Activated T-helper 1 cell treated with anti-CD3 and anti-CD28 coated beads, Interleukin-12 subunit alpha, Interleukin-12 subunit beta, Interleukin-2, Interleukin-4 antibody, amounts not matched to agents 30 ng/mL and 10 ng/mL and 1 ng/mL, durations not matched to agents 14 hours and 24 hours and 36 hours (primary cell): ENCODE measurements at regions of chr5 and their contacts with region 1.

Region 1: DNA sequence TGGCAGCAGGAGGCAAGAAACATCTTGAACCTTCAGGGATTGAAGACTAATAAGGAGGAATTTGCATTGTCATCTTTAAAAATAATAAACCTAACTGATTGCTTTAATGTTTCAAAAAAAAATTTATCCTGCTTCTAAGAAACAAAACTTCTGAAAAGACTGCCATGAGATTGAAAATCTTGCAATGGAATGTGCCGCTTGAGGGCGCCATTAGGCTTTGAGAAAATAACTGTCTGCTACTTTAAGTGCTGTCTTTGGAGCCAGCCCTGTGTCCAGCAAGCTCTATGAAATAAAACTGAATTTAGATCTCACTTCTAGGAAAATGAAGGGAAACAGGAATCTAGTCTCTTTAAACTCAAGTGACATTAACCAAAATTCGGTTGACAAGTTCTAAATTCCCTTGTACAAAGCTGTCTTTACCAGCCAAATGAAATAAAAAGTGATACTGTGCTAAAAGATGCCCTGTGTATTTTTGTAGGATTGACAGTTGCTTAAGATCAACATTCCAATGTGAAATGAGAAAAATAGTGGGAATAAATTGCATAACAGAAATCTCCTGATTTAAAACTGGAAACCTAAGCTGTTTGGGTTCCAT is 79.4 kb downstream of the ESM1 start:
- DNase-seq: peak; percentile 50
- H3K4me3 Mint-ChIP-seq: no peak overlapping the region
- H3K27ac Mint-ChIP-seq: no peak overlapping the region
- H3K4me1 Mint-ChIP-seq: peaks cover 55% of the 10 kb centered on the region
- H3K27me3 Mint-ChIP-seq: peaks cover 37% of the 10 kb centered on the region

Region 2: DNA sequence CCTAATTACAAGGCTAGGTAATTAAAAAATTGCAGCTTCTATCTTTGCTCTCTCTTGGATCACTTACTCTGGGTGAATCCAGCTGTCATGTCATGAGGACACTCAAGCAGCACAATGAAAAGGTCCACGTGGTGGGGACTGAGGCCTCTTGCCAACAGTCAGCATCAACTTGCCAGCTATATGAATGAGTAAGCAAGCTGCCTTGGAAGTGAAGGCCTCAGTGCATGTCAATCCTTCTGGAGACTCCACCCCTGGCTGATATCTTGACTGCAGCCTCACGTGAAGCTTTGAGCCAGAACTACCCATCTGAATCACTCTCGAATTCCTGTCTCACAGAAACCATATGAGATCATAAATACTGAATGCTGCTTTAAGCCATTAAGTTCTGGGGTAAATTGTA is 248.0 kb before region 1 on chr5:
- intact Hi-C with region 1: no loop called
- DNase-seq: no peak
- H3K4me3 Mint-ChIP-seq: no peak overlapping the region
- H3K27ac Mint-ChIP-seq: no peak overlapping the region
- H3K4me1 Mint-ChIP-seq: peaks cover 17% of the 10 kb centered on the region
- H3K27me3 Mint-ChIP-seq: no peaks in the 10 kb centered on the region

Region 3: DNA sequence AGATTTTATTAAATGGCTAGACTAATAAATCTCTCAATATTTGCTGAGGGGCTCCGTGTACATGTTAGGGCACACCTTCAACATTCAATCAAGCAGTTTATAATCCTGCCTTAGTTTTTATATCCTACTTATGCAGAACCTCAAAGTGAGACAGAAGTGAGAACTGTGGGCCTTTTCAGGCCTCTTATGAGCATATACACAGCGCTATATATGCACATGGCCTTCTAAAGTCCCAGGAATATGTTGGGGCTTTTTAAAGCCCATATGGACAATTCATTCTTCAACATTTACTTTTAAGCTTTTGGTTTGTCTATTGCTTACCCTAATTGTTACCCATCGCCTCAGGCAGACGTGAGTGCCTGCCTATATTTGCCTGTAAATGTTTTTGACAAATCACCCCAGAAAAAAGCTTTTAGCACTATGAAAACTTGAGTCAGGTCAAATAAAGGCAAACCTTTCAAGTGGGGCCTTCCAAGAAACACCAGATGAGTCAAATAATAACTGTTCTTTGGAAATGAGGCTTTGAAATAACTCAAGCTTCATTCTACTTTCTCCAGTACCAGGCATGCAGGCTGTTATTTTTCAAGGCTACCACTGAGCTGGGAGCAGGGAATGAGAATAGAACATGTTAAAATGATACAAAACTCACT is 21.2 kb after region 1 on chr5:
- intact Hi-C with region 1: loop called (anchors 1 kb)
- DNase-seq: no peak
- H3K4me3 Mint-ChIP-seq: no peak overlapping the region
- H3K27ac Mint-ChIP-seq: peak overlapping the region; percentile 3
- H3K4me1 Mint-ChIP-seq: peaks cover 8% of the 10 kb centered on the region
- H3K27me3 Mint-ChIP-seq: peaks cover 14% of the 10 kb centered on the region

Region 4: DNA sequence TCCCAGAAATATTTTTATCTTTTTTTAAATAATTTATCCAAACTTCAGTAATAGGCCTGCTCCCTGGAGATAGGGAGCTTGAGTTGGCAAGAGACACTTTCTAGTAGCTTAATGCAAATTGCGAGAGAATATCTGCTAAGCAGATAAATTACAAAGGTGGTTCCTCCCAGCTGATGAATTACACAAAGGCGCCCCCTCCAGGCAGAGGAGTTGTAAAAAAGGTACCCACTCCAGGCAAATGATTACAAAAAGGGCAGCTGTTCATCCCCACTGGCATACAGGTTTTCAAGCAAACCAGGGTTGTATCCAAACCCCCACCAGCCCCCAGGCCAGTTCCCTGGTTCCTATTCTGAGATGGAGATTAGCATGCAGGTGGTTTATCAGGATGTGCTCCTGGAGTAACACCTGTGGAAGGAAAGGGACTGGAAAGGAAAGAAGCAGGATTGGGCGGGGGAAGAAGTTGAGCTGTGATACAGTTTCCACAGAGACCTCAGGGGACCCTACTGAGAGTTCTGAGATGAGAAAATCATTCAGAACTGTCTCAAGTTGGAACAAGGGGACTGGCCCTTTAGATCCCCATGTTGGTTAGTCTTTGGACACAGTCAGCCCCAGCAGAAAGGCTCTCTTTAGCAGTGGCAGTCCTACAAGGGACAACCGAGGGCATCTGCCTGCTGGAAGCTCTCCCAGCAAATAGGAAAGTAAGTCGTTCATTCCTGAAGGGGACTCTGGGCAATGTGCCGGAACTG is 53.8 kb after region 1 on chr5:
- intact Hi-C with region 1: loop called (anchors 1 kb)
- DNase-seq: no peak
- H3K4me3 Mint-ChIP-seq: no peak overlapping the region
- H3K27ac Mint-ChIP-seq: no peak overlapping the region
- H3K4me1 Mint-ChIP-seq: peaks cover 4% of the 10 kb centered on the region
- H3K27me3 Mint-ChIP-seq: peaks cover 15% of the 10 kb centered on the region

Region 5: DNA sequence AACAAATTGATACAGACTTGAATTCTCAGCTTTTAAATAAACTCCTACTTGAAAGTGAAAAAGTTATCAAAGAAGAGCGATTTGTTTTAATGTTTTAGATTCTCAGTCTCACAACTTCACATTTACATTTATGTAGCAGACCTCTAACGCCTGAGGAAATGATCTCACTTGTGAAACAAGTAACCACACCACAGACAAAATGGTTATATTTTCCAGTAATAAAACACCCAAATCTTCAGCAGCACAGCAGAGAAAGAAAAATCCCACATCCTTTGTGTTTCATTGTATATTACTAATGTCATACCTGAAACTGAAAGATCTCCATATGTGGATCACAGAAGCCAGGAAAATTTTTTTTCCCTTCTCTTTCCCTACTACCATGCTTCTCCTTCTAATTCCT is 166.6 kb after region 1 on chr5:
- intact Hi-C with region 1: loop called (anchors 1 kb)
- DNase-seq: peak; percentile 31
- H3K4me3 Mint-ChIP-seq: peak overlapping the region; percentile 57
- H3K27ac Mint-ChIP-seq: peak overlapping the region; percentile 88
- H3K4me1 Mint-ChIP-seq: peaks cover 53% of the 10 kb centered on the region
- H3K27me3 Mint-ChIP-seq: no peaks in the 10 kb centered on the region

Region 6: DNA sequence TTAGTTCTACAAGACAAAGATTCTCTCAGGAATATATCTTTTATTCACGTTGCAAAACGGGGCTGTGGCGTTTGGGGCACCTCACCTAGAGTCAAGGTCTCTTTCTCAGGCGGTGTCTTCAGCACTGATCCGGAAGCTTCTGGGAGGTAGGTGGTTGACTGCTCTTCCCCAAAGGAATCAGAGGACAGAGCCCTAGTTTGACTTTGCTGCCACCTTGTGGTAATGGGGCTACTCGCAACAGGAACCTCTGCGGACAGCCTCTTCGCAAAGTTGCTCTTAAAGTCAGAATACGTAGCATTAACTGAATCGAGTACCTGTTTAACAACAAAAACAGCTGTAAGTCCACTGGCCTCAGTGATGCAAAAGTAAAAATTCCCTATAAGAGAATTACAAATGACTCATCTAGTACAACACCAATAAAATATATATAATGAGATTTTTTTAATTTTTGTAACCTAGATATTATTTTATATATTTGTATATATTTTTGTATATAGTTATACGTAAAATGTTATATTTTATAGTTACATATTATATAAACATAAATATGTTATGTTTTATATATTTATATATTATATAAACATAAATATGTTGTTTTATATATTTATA is 240.6 kb after region 1 on chr5:
- intact Hi-C with region 1: loop called (anchors 1 kb)
- DNase-seq: peak; percentile 82
- H3K4me3 Mint-ChIP-seq: peak overlapping the region; percentile 20
- H3K27ac Mint-ChIP-seq: no peak overlapping the region
- H3K4me1 Mint-ChIP-seq: peaks cover 31% of the 10 kb centered on the region
- H3K27me3 Mint-ChIP-seq: peaks cover 17% of the 10 kb centered on the region